PC-9 (cell line): ENCODE measurements at regions of chr5 and their contacts with region 1.

Region 1: DNA sequence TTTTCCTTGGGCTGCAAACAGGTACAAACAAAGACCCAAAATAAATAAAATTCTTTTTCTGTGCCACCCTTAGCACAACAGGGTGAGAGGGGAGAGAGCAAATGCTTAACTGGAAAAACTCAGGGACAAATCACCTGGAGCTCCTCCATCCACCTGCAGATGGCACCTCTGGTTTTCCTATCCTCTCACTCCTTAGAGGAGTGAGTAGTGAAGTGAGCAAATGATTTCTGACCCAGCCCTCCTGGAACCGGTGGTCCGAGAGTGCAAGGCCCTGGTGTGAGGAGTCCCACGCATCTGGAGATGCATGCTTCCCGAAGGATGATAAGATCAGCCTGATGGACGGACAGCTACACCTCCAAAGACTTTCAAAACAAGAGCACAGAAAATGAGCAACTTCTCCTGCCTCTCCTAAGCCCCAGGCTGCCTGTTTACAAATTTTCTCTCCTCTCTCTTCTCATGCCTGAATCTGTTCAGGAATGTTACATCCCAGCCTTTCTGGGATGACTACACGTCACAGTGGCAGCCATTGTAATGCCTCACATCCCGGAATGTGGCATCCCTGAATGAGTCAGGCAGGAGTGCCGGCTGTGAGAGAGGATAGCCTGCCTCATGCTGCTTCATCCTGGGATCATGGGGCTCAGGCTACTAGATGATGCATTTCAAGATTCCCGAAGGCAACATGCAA is 86.4 kb downstream of the ADRB2 start:
- DNase-seq: peak; percentile 87 to 95
- H3K4me3 ChIP-seq: no peak overlapping the region
- H3K27ac ChIP-seq: peak overlapping the region; percentile 98
- H3K4me1 ChIP-seq: peaks cover 89% of the 10 kb centered on the region
- H3K27me3 ChIP-seq: no peaks in the 10 kb centered on the region
- CTCF ChIP-seq: peak; percentile 69

Region 2: DNA sequence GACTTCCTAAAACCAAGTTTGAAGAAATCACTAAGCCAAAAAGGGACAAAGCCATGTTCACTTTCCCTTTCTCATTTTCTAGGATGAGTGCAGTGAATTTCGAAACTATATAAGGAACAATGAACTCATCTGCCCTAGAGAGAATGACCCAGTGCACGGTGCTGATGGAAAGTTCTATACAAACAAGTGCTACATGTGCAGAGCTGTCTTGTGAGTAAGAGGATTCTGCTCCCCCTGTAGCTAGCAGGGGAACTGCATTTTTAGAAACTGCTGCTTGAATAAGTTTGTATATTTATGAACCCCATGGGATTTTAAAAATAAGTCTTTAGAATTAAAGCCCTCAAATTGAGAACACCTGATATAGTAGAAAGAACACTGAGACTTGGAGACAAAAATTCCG is 787.2 kb before region 1 on chr5:
- CTCF ChIA-PET with region 1: no interaction called
- POLR2A ChIA-PET with region 1: no interaction called
- intact Hi-C with region 1: no loop called
- DNase-seq: no peak
- H3K4me3 ChIP-seq: no peak overlapping the region
- H3K27ac ChIP-seq: no peak overlapping the region
- H3K4me1 ChIP-seq: no peaks in the 10 kb centered on the region
- H3K27me3 ChIP-seq: no peaks in the 10 kb centered on the region
- CTCF ChIP-seq: no peak; the same call in 1 of the 2 replicates

Region 3: DNA sequence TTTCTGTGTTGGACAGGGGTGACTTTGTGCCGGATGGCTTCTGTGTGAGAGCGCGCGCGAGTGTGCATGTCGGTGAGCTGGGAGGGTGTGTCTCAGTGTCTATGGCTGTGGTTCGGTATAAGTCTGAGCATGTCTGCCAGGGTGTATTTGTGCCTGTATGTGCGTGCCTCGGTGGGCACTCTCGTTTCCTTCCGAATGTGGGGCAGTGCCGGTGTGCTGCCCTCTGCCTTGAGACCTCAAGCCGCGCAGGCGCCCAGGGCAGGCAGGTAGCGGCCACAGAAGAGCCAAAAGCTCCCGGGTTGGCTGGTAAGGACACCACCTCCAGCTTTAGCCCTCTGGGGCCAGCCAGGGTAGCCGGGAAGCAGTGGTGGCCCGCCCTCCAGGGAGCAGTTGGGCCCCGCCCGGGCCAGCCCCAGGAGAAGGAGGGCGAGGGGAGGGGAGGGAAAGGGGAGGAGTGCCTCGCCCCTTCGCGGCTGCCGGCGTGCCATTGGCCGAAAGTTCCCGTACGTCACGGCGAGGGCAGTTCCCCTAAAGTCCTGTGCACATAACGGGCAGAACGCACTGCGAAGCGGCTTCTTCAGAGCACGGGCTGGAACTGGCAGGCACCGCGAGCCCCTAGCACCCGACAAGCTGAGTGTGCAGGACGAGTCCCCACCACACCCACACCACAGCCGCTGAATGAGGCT is 86.7 kb before region 1 on chr5 and contains the start of gene ADRB2:
- CTCF ChIA-PET with region 1: interaction called, 11 read pairs
- POLR2A ChIA-PET with region 1: interaction called, 5 read pairs
- intact Hi-C with region 1: loop called (anchors 1 kb)
- DNase-seq: peak; percentile 90 to 98
- H3K4me3 ChIP-seq: peak within 1 kb of the TSS; percentile 63
- H3K27ac ChIP-seq: peak within 1 kb of the TSS; percentile 68
- H3K4me1 ChIP-seq: peaks cover 24% of the 10 kb centered on the region
- H3K27me3 ChIP-seq: no peaks in the 10 kb centered on the region
- CTCF ChIP-seq: no peak
- total RNA-seq, gene ADRB2: 2.8 and 3.1 TPM in 2 replicates

Region 4: GRCh38 chr5:148979104-148979723 is 66.4 kb after region 1 on chr5:
- CTCF ChIA-PET with region 1: interaction called, 4 read pairs
- POLR2A ChIA-PET with region 1: interaction called, 19 read pairs
- intact Hi-C with region 1: loop called (anchors 1 kb)
- DNase-seq: peak; percentile 84 to 85
- H3K4me3 ChIP-seq: peak overlapping the region; percentile 32; the same call in 1 of the 2 replicates
- H3K27ac ChIP-seq: peak overlapping the region; percentile 99
- H3K4me1 ChIP-seq: peaks cover 79% of the 10 kb centered on the region
- H3K27me3 ChIP-seq: no peaks in the 10 kb centered on the region
- CTCF ChIP-seq: no peak

Region 5: GRCh38 chr5:149063017-149063687 is 150.3 kb after region 1 on chr5 and contains the start of gene SH3TC2:
- CTCF ChIA-PET with region 1: no interaction called
- POLR2A ChIA-PET with region 1: no interaction called
- intact Hi-C with region 1: loop called (anchors 2 kb)
- DNase-seq: peak; percentile 81 to 90
- H3K4me3 ChIP-seq: peak within 1 kb of the TSS; percentile 46; the same call in 1 of the 2 replicates
- H3K27ac ChIP-seq: peak within 1 kb of the TSS; percentile 99
- H3K4me1 ChIP-seq: peaks cover 68% of the 10 kb centered on the region
- H3K27me3 ChIP-seq: no peaks in the 10 kb centered on the region
- CTCF ChIP-seq: no peak
- total RNA-seq, gene SH3TC2: 32.1 and 38.8 TPM in 2 replicates

Region 6: GRCh38 chr5:149228618-149229297 is 315.9 kb after region 1 on chr5:
- CTCF ChIA-PET with region 1: no interaction called
- POLR2A ChIA-PET with region 1: no interaction called
- intact Hi-C with region 1: loop called (anchors 5 kb)
- DNase-seq: peak; percentile 40 to 53
- H3K4me3 ChIP-seq: no peak overlapping the region
- H3K27ac ChIP-seq: no peak overlapping the region
- H3K4me1 ChIP-seq: peaks cover 18% of the 10 kb centered on the region
- H3K27me3 ChIP-seq: no peaks in the 10 kb centered on the region
- CTCF ChIP-seq: peak; percentile 68

Region 7: DNA sequence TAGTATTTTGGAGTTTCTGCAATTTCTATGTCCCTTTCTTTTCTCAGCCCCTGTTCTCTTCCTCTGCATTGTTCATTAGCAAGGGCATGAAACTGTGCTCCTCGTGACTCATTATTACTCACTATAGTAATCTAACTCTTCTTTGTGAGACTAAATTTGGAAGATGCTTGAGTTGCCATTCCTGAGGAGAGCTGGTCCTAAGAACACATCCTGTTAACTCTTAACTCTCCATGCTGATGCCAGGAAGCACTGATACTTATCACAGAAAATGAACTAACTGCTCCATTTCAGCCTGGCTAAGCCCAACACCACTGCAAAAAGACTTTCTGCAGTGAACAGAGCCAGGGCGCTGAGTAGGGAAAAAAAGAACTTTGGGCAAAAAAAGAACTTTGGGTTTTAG is 649.0 kb after region 1 on chr5:
- CTCF ChIA-PET with region 1: interaction called, 3 read pairs
- POLR2A ChIA-PET with region 1: no interaction called
- intact Hi-C with region 1: loop called (anchors 5 kb)
- DNase-seq: peak; percentile 48 to 95
- H3K4me3 ChIP-seq: peak overlapping the region; percentile 43; the same call in 1 of the 2 replicates
- H3K27ac ChIP-seq: peak overlapping the region; percentile 97
- H3K4me1 ChIP-seq: peaks cover 53% of the 10 kb centered on the region
- H3K27me3 ChIP-seq: no peaks in the 10 kb centered on the region
- CTCF ChIP-seq: no peak

Region 8: GRCh38 chr5:149581192-149581861 is 668.5 kb after region 1 on chr5 and contains the start of gene ARHGEF37:
- CTCF ChIA-PET with region 1: no interaction called
- POLR2A ChIA-PET with region 1: no interaction called
- intact Hi-C with region 1: no loop called
- DNase-seq: peak in 1 of 2 experiments; percentile 79
- H3K4me3 ChIP-seq: peak within 1 kb of the TSS; percentile 60
- H3K27ac ChIP-seq: 0 out of 2 replicates have a peak within 1 kb of the TSS, but pooled peaks have one; percentile 26
- H3K4me1 ChIP-seq: peaks cover 19% of the 10 kb centered on the region
- H3K27me3 ChIP-seq: no peaks in the 10 kb centered on the region
- CTCF ChIP-seq: no peak
- total RNA-seq, gene ARHGEF37: 5.5 and 8.6 TPM in 2 replicates